ENCODE measurements at regions of chr1 and their contacts with region 1.

Region 1: GRCh38 chr1:8987881-8988617 is 38.2 kb downstream of the SLC2A7 start:
- DNase-seq: peak; percentile 64
- H3K4me3 ChIP-seq: no peak overlapping the region
- H3K27ac ChIP-seq: peak overlapping the region; percentile 50
- H3K4me1 ChIP-seq: peaks cover 16% of the 10 kb centered on the region
- H3K27me3 ChIP-seq: no peaks in the 10 kb centered on the region
- CTCF ChIP-seq: peak; percentile 88 to 93
- POLR2A ChIP-seq: no peak

Region 2: GRCh38 chr1:8878448-8879347 is 109.4 kb before region 1 on chr1 and contains the start of gene ENO1:
- CTCF ChIA-PET with region 1: no interaction called
- POLR2A ChIA-PET with region 1: no interaction called
- dilution Hi-C with region 1: no loop called
- intact Hi-C with region 1: loop called (anchors 1 kb)
- DNase-seq: peak; percentile 99
- H3K4me3 ChIP-seq: peak within 1 kb of the TSS; percentile 48 to 83 (median 62)
- H3K27ac ChIP-seq: peak within 1 kb of the TSS; percentile 77
- H3K4me1 ChIP-seq: peaks cover 41% of the 10 kb centered on the region
- H3K27me3 ChIP-seq: no peaks in the 10 kb centered on the region
- CTCF ChIP-seq: no peak
- POLR2A ChIP-seq: peak; percentile 94
- total RNA-seq, gene ENO1: 1,530 and 1,593 TPM in 2 replicates

Region 3: GRCh38 chr1:8925406-8925805 is 62.6 kb before region 1 on chr1:
- CTCF ChIA-PET with region 1: interaction called, 78 read pairs
- POLR2A ChIA-PET with region 1: no interaction called
- dilution Hi-C with region 1: no loop called
- intact Hi-C with region 1: no loop called
- DNase-seq: no peak
- H3K4me3 ChIP-seq: no peak overlapping the region
- H3K27ac ChIP-seq: no peak overlapping the region
- H3K4me1 ChIP-seq: no peaks in the 10 kb centered on the region
- H3K27me3 ChIP-seq: peaks cover 4 to 14% of the 10 kb centered on the region in 2 experiments
- CTCF ChIP-seq: no peak
- POLR2A ChIP-seq: no peak

Region 4: DNA sequence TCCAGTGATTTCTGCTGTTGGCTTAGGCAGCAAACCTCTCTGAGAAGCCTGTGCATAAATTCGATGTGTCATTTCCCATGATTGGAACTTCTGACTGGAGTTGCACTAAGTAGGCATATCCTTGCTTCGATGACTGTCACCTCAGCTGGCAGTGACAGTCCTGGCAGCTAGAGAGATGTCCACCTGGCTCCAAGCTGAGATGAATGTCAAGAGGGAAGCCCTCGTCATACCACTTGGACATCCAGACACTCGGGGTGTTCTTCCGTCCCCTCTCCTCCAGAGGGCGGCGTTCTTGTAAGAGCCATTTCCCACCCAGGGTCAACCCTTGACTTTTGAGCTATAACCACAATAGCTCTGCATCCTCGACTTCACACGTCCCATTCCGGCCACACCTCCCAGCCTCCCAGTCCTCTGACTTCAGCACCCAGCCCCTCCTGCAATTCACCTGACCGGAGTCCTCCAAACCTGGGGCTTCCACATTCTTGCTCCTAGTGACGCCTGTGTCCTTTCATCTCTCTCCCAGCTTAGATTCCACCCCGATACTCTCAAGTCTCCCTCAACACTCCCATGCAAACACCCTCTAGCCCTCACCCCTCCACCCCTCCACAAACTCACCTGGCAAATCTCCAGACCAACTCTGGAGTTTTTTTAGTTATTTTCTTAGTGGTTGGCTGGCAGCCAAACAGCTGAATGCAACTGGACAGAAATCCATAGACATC is 25.1 kb before region 1 on chr1:
- CTCF ChIA-PET with region 1: interaction called, 64 read pairs
- POLR2A ChIA-PET with region 1: no interaction called
- dilution Hi-C with region 1: no loop called
- intact Hi-C with region 1: loop called (anchors 1 kb)
- DNase-seq: peak; percentile 40
- H3K4me3 ChIP-seq: no peak overlapping the region
- H3K27ac ChIP-seq: no peak overlapping the region
- H3K4me1 ChIP-seq: peaks cover 3% of the 10 kb centered on the region
- H3K27me3 ChIP-seq: no peaks in the 10 kb centered on the region
- CTCF ChIP-seq: peak; percentile 50 to 62
- POLR2A ChIP-seq: no peak

Measured in endothelial cell of umbilical vein (primary cell).